Activated B cell treated with CpG ODN at 0.5 μM for 24 hours (primary cell): ENCODE measurements at regions of chr1 and their contacts with region 1.

Region 1: DNA sequence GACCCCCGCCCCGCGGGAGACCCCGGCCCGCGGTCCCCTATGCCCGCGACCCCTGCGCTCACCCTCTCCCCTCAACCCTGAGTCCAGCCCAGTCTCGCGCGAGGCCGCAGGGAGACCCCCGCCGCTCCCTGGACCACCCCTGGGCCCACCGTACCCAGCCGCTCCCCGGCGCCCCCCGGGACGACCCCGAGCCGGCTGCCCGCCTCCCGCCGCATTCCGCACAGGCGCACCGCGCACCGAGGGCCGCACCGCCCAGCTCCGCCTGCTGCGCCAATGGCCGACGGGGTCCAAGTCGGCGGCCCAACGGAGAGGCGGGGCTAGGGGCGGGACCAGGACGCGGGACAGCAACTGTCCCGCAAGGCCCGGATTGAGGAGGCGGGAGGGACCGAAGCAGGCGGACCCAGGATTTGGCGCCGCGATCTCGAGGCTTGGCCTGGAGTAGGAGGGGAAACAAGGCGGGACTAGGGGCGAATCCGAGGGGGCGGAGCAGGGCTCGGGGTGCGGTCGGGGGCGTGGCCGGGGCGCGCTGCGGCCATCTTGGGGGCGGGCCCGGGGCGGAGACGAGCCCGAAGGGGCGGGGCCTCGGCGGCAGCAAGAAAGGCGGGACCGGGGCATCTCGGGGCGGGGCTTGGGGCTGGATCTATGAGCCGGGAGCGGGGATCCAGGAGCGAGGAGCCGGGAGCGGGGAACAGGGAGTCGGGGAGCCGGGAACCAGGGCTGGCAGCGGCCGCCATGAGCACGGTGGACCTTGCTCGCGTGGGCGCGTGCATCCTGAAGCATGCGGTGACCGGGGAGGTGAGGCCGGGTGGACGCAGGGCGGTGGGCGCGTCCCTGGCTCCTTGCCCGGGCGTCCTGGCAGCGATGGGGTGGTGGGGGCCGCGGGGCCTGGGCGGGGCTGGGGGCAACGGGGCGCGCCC is at the start of gene PRXL2B:
- DNase-seq: peak; percentile 99
- ATAC-seq: peak; percentile 74
- H3K4me3 Mint-ChIP-seq: peak within 1 kb of the TSS; percentile 92
- H3K27ac Mint-ChIP-seq: peak within 1 kb of the TSS; percentile 98
- H3K4me1 Mint-ChIP-seq: peaks cover 47% of the 10 kb centered on the region
- H3K27me3 Mint-ChIP-seq: no peaks in the 10 kb centered on the region
- CTCF ChIP-seq: no peak
- total RNA-seq, gene PRXL2B: 12.6 and 13.5 TPM in 2 replicates

Region 2: DNA sequence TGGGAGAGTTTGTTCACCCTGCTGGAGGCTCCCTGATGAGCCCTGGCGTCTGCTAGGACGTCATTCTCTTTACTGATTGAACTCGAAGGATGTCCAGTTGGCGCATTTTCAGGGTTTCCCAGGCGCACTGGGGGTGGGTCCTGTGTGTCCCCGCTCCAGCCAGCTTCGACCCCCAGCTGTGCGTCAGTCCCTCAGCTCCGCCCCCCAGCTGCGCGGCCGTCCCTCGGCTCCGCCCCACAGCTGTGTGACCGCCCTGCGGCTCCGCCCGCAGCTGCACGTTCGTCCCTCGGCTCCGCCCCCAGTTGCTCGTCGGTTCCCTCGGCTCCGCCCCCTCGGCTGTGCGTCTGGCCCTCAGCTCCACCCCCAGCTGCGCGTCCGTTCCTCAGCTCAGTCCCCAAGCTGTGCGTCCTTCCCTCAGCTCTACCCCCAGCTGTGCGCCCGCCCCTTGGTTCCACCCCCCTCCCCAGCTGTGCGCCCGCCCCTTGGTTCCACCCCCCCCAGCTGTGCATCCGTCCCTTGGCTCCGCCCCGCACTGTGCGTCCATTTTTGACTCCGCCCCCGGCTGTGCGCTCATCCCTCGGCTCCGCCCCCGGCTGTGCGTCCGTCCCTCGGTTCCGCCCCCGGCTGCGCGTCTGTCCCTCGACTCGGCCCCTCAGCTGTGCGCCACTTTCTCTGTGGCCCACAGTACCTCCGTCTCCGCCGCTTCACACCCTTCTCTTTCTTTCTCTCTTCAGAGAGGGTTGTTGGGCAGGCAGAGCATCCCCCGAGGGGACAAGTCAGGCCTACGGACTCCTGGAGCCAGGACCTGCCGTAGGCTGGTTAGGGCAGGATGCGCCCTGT is 453.2 kb before region 1 on chr1:
- CTCF ChIA-PET with region 1: no interaction called
- POLR2A ChIA-PET with region 1: no interaction called
- intact Hi-C with region 1: loop called (anchors 1 kb)
- DNase-seq: peak; percentile 97
- ATAC-seq: peak; percentile 90
- H3K4me3 Mint-ChIP-seq: peak overlapping the region; percentile 80
- H3K27ac Mint-ChIP-seq: peak overlapping the region; percentile 75
- H3K4me1 Mint-ChIP-seq: peaks cover 14% of the 10 kb centered on the region
- H3K27me3 Mint-ChIP-seq: no peaks in the 10 kb centered on the region
- CTCF ChIP-seq: no peak

Region 3: GRCh38 chr1:2300851-2301606 is 285.4 kb before region 1 on chr1:
- CTCF ChIA-PET with region 1: interaction called, 3 read pairs
- POLR2A ChIA-PET with region 1: interaction called, 9 read pairs
- intact Hi-C with region 1: loop called (anchors 2 kb)
- DNase-seq: peak; percentile 86
- ATAC-seq: peak; percentile 82
- H3K4me3 Mint-ChIP-seq: peak overlapping the region; percentile 85
- H3K27ac Mint-ChIP-seq: peak overlapping the region; percentile 97
- H3K4me1 Mint-ChIP-seq: peaks cover 65% of the 10 kb centered on the region
- H3K27me3 Mint-ChIP-seq: no peaks in the 10 kb centered on the region
- CTCF ChIP-seq: no peak

Region 4: DNA sequence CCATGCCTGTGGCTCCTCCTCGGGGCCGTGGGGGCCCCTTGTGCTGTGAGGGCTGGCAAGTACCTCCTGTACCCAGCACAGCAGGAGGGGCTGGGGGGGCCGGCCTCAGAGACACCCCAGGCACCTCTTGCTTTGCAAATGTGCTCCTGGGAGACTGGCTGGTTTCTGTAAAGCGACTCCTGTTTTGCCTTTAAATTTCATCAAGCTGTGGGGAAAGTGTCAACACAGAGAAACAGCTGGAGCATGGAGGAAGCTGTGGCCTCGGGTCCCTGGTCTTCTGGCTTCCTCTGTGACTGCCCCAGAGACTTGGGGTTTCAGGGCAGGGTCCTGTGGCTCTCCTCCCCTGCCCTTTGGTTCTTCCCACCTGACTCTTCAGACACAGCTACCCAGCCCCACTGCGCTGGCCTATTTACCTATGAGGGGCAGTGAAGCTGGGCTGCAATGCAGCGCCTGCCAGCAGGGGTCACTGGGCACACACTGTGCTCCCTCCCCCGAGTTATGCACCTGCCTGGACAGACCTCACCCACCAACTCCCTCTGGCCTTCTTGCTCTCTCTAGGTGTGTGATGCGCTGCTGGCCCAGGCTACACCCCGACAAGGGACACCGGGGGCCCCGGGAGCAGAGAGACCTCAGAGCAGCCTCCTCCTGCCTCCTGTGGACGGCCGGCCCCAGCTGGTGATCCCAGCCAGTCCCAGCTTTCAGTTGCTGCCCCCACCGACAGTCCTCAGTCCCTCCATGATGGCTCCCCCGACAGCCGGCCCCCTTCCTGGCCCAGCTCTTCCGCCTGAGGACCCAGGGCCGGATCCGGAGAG is 156.4 kb before region 1 on chr1:
- CTCF ChIA-PET with region 1: no interaction called
- POLR2A ChIA-PET with region 1: no interaction called
- intact Hi-C with region 1: no loop called
- DNase-seq: no peak
- ATAC-seq: no peak
- H3K4me3 Mint-ChIP-seq: no peak overlapping the region
- H3K27ac Mint-ChIP-seq: no peak overlapping the region
- H3K4me1 Mint-ChIP-seq: no peaks in the 10 kb centered on the region
- H3K27me3 Mint-ChIP-seq: peaks cover 3% of the 10 kb centered on the region
- CTCF ChIP-seq: no peak

Region 5: GRCh38 chr1:2525920-2526823 is 60.2 kb before region 1 on chr1 and contains the start of gene PANK4:
- CTCF ChIA-PET with region 1: interaction called, 8 read pairs
- POLR2A ChIA-PET with region 1: interaction called, 48 read pairs
- intact Hi-C with region 1: loop called (anchors 1 kb)
- DNase-seq: peak; percentile 90
- ATAC-seq: peak; percentile 93
- H3K4me3 Mint-ChIP-seq: peak within 1 kb of the TSS; percentile 96
- H3K27ac Mint-ChIP-seq: peak within 1 kb of the TSS; percentile 96
- H3K4me1 Mint-ChIP-seq: peaks cover 45% of the 10 kb centered on the region
- H3K27me3 Mint-ChIP-seq: peaks cover 3% of the 10 kb centered on the region
- CTCF ChIP-seq: no peak
- total RNA-seq, gene PANK4: 43.1 and 54.0 TPM in 2 replicates

Region 6: GRCh38 chr1:2561898-2562545 is 24.4 kb before region 1 on chr1:
- CTCF ChIA-PET with region 1: interaction called, 39 read pairs
- POLR2A ChIA-PET with region 1: interaction called, 224 read pairs
- intact Hi-C with region 1: no loop called
- DNase-seq: no peak
- ATAC-seq: peak; percentile 64
- H3K4me3 Mint-ChIP-seq: no peak overlapping the region
- H3K27ac Mint-ChIP-seq: no peak overlapping the region
- H3K4me1 Mint-ChIP-seq: peaks cover 18% of the 10 kb centered on the region
- H3K27me3 Mint-ChIP-seq: no peaks in the 10 kb centered on the region
- CTCF ChIP-seq: no peak

Region 7: GRCh38 chr1:2936559-2937515 is 350.4 kb after region 1 on chr1:
- CTCF ChIA-PET with region 1: no interaction called
- POLR2A ChIA-PET with region 1: no interaction called
- intact Hi-C with region 1: no loop called
- DNase-seq: no peak
- ATAC-seq: no peak
- H3K4me3 Mint-ChIP-seq: no peak overlapping the region
- H3K27ac Mint-ChIP-seq: no peak overlapping the region
- H3K4me1 Mint-ChIP-seq: no peaks in the 10 kb centered on the region
- H3K27me3 Mint-ChIP-seq: no peaks in the 10 kb centered on the region
- CTCF ChIP-seq: no peak

Region 8: DNA sequence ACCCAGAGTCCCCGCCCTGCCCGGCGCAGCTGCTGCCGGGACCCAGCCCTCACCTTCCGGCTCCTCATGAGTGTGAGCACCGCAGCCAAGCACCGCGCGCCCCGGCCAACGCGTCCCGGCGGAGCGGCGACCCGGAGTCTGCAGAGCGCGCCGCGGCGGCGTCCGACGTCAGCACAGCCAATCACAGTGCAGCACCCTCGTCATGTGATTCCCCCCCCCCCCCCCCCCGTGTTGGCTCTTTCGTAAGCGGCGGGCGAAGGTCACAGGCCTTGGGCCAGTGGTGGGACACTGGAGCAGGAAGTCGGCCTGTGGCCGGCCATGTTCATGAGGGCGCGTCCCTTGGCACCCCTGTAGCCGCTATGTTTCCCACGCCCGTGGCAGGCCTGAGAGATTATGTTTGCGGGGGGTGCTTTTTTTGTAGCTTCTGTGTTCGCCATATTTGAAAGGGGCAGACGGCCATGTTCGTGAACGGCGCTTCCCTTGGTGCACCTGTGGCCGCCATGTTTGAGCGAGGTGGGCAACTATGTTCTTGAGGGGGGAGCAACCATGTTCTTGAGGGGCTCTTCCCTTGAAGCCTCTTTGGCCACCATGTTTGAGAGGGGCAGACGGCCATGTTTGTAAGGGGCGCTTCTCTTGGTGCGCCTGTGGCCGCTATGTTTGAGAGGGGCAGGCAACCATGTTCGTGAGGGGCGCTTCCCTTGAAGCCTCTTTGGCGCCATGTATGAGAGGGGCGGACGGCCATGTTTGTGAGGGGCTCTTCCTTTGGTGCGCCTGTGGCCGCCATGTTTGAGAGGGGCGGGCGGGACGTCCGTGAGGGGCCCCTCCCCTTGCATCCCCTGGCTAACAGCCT is 1313.9 kb after region 1 on chr1 and contains the start of gene C1orf174:
- CTCF ChIA-PET with region 1: no interaction called
- POLR2A ChIA-PET with region 1: no interaction called
- intact Hi-C with region 1: loop called (anchors 10 kb)
- DNase-seq: peak; percentile 87
- ATAC-seq: peak; percentile 82
- H3K4me3 Mint-ChIP-seq: peak within 1 kb of the TSS; percentile 94
- H3K27ac Mint-ChIP-seq: peak within 1 kb of the TSS; percentile 97
- H3K4me1 Mint-ChIP-seq: peaks cover 25% of the 10 kb centered on the region
- H3K27me3 Mint-ChIP-seq: no peaks in the 10 kb centered on the region
- CTCF ChIP-seq: no peak
- total RNA-seq, gene C1orf174: 26.2 and 27.5 TPM in 2 replicates